ENCODE measurements at regions of chr7 and their contacts with region 1.

Region 1: DNA sequence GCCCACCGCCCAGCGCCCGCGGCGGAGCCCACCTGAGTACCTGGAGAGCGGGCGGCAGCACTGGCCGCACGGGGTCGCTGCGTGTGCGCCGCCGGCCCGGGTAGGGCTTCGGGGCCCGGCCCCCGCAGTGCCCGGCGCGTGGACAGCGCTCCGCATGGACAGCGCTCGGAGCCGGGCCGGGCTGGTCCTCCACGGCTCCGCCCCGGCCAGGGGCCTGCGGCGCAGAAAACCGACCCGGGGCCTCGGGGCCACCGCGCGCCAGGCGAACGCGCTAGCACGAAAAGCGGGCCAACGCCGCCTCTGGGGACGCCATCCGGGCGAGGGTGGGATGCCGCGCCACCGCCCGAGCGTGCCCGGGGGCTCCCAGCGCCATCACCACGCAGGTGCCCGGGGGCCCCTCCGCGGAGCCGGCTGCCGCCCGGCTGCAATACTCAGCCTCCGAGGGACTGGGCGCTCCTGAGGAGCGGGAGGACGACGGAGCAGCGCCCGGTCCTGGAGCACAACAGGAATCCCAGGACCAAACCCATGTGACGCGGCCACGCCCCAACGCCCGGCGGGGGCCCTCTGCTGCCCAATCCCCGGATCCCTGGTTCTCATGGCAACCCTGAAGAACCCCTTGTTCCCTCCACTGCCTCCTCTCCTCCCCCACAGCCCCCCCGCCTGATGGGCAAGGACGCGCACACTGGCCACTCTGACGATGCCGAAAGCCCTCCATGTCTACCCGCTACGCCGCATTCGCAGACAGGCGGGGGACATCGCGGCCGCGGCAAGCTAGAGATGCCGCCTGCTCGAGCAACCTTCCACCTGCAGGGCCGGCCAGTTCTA is at the start of gene GRB10:
- DNase-seq: no peak
- H3K4me3 Mint-ChIP-seq: peak within 1 kb of the TSS; percentile 65
- H3K27ac Mint-ChIP-seq: no peak within 1 kb of the TSS
- H3K4me1 Mint-ChIP-seq: peaks cover 21% of the 10 kb centered on the region
- H3K27me3 Mint-ChIP-seq: peaks cover 7% of the 10 kb centered on the region
- total RNA-seq, gene GRB10: 8.4 to 9.9 TPM

Region 2: GRCh38 chr7:50739744-50740435 is 42.7 kb before region 1 on chr7:
- CTCF ChIA-PET with region 1: no interaction called
- POLR2A ChIA-PET with region 1: no interaction called
- intact Hi-C with region 1: loop called (anchors 2 kb)
- DNase-seq: peak; percentile 80
- H3K4me3 Mint-ChIP-seq: peak overlapping the region; percentile 62
- H3K27ac Mint-ChIP-seq: peak overlapping the region; percentile 68
- H3K4me1 Mint-ChIP-seq: peaks cover 27% of the 10 kb centered on the region
- H3K27me3 Mint-ChIP-seq: no peaks in the 10 kb centered on the region

Region 3: GRCh38 chr7:51067757-51068156 is 285.2 kb after region 1 on chr7:
- CTCF ChIA-PET with region 1: no interaction called
- POLR2A ChIA-PET with region 1: no interaction called
- intact Hi-C with region 1: loop called (anchors 5 kb)
- DNase-seq: peak; percentile 54
- H3K4me3 Mint-ChIP-seq: no peak overlapping the region
- H3K27ac Mint-ChIP-seq: no peak overlapping the region
- H3K4me1 Mint-ChIP-seq: no peaks in the 10 kb centered on the region
- H3K27me3 Mint-ChIP-seq: no peaks in the 10 kb centered on the region

Region 4: DNA sequence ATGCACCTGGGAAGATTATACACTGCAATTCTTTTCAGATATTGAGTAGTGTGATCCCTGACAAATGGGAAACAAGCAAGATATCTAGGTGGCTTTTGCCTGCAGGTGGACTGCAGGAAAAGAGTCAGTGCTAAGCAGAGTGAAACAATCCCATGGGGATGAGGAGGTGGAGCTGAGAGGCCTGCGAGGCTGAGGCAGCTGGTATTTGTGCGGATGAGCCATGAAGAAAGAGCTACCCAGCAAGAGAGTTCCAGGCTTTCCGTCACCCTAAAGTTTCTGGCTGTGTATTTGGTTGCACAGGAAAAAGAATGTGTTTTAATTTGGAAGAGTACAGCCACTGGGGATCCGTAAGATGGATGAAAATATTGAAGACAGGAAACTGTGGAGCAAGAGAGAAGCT is 1248.1 kb after region 1 on chr7:
- CTCF ChIA-PET with region 1: no interaction called
- POLR2A ChIA-PET with region 1: no interaction called
- intact Hi-C with region 1: no loop called
- DNase-seq: no peak
- H3K4me3 Mint-ChIP-seq: no peak overlapping the region
- H3K27ac Mint-ChIP-seq: no peak overlapping the region
- H3K4me1 Mint-ChIP-seq: no peaks in the 10 kb centered on the region
- H3K27me3 Mint-ChIP-seq: no peaks in the 10 kb centered on the region

Measured in activated CD4-positive, alpha-beta memory T cell treated with anti-CD3 and anti-CD28 coated beads for 36 hours (primary cell).